ENCODE measurements at regions of chr4 and their contacts with region 1.

Region 1: DNA sequence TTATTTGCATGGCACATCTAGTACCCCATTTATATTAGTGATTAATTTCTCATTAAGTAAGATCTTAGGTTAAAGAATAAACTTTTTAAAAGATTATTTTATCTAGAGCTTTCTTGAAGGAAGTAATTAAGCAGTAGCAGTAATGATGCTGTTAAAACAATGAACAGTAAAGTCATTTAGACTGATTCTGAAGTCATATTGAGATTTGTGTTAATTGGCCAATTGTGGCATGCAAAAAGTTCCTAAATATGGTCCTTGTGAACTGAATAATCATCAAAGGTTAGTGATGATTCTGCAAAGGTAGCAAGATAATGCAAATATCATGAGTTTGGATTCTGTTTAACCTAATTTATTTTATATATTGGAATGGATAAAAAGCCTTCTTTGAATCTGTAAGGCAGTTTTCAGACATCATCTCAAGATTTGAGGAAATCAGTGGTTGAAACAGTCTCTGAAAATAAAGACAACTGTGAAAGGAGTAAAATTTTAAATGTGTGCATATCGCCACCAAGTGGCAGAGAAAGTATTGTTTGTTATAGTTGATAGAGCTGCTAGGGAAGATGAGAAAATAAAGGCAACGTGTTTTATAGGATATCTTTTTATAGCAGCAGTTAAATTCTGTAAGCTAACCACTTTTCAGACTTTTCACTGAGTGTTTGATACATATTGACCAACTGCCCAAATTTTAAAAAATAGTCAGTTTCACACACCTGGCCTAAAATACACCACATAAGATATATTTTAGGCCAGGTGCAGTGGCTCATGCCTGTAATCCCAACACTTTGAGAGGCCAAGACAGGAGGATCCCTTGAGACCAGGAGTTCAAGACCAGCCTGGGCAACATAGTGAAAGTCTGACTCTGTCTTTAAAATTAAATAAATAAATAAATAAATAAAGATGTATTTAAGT is 79.6 kb downstream of the CCKAR start:
- DNase-seq: no peak
- ATAC-seq: no peak
- H3K4me3 Mint-ChIP-seq: no peak overlapping the region
- H3K27ac Mint-ChIP-seq: no peak overlapping the region
- H3K4me1 Mint-ChIP-seq: no peaks in the 10 kb centered on the region
- H3K27me3 Mint-ChIP-seq: no peaks in the 10 kb centered on the region
- CTCF ChIP-seq: no peak

Region 2: GRCh38 chr4:24794916-24795665 is 1615.5 kb before region 1 on chr4 and contains the start of gene SOD3:
- CTCF ChIA-PET with region 1: no interaction called
- POLR2A ChIA-PET with region 1: no interaction called
- intact Hi-C with region 1: no loop called
- DNase-seq: no peak
- ATAC-seq: no peak
- H3K4me3 Mint-ChIP-seq: no peak within 1 kb of the TSS
- H3K27ac Mint-ChIP-seq: no peak within 1 kb of the TSS
- H3K4me1 Mint-ChIP-seq: no peaks in the 10 kb centered on the region
- H3K27me3 Mint-ChIP-seq: peaks cover 14% of the 10 kb centered on the region
- CTCF ChIP-seq: no peak
- total RNA-seq, gene SOD3: not detected in 2 replicates

Region 3: GRCh38 chr4:25925486-25926201 is 485.0 kb before region 1 on chr4:
- CTCF ChIA-PET with region 1: interaction called, 9 read pairs
- POLR2A ChIA-PET with region 1: no interaction called
- intact Hi-C with region 1: loop called (anchors 1 kb)
- DNase-seq: no peak
- ATAC-seq: peak; percentile 57
- H3K4me3 Mint-ChIP-seq: no peak overlapping the region
- H3K27ac Mint-ChIP-seq: no peak overlapping the region
- H3K4me1 Mint-ChIP-seq: no peaks in the 10 kb centered on the region
- H3K27me3 Mint-ChIP-seq: no peaks in the 10 kb centered on the region
- CTCF ChIP-seq: no peak

Region 4: GRCh38 chr4:26028793-26029567 is 381.7 kb before region 1 on chr4:
- CTCF ChIA-PET with region 1: interaction called, 31 read pairs
- POLR2A ChIA-PET with region 1: no interaction called
- intact Hi-C with region 1: loop called (anchors 1 kb)
- DNase-seq: peak; percentile 55
- ATAC-seq: peak; percentile 92
- H3K4me3 Mint-ChIP-seq: no peak overlapping the region
- H3K27ac Mint-ChIP-seq: no peak overlapping the region
- H3K4me1 Mint-ChIP-seq: peaks cover 2% of the 10 kb centered on the region
- H3K27me3 Mint-ChIP-seq: peaks cover 13% of the 10 kb centered on the region
- CTCF ChIP-seq: no peak

Region 5: GRCh38 chr4:26081795-26082498 is 328.7 kb before region 1 on chr4:
- CTCF ChIA-PET with region 1: interaction called, 25 read pairs
- POLR2A ChIA-PET with region 1: interaction called, 3 read pairs
- intact Hi-C with region 1: loop called (anchors 1 kb)
- DNase-seq: no peak
- ATAC-seq: peak; percentile 52
- H3K4me3 Mint-ChIP-seq: no peak overlapping the region
- H3K27ac Mint-ChIP-seq: no peak overlapping the region
- H3K4me1 Mint-ChIP-seq: peaks cover 14% of the 10 kb centered on the region
- H3K27me3 Mint-ChIP-seq: peaks cover 3% of the 10 kb centered on the region
- CTCF ChIP-seq: no peak

Region 6: DNA sequence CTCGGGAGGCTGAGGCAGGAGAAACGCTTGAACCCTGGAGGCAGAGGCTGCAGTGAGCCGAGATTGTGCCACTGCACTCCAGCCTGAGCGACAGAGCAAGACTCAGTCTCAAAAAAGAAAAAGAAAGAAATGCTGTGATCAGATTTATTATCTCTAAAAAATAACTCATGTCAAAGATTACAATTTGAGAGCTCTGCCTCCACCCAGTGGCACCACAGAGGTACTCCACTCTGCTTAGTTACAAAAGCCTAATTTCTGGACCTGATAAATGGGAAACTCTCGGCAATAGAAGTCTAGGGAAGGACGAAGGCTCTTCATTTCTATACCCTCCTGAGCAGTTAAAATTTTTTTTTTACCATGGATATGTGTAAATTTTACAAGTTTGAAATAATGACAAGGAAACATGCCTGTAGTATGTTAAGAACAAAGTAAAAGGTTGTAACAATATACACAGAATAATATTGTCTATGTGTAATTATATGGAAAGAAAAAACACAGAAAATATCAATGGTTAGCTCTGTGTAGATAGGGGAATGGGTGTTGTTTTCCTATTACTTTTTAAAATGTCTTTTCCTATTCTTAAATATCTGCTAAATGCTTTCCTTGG is 599.8 kb after region 1 on chr4:
- CTCF ChIA-PET with region 1: interaction called, 3 read pairs
- POLR2A ChIA-PET with region 1: no interaction called
- intact Hi-C with region 1: loop called (anchors 1 kb)
- DNase-seq: peak; percentile 31
- ATAC-seq: peak; percentile 85
- H3K4me3 Mint-ChIP-seq: no peak overlapping the region
- H3K27ac Mint-ChIP-seq: peak overlapping the region; percentile 80
- H3K4me1 Mint-ChIP-seq: peaks cover 5% of the 10 kb centered on the region
- H3K27me3 Mint-ChIP-seq: no peaks in the 10 kb centered on the region
- CTCF ChIP-seq: peak; percentile 95